HepG2 (cell line): ENCODE measurements at regions of chr20 and their contacts with region 1.

Region 1: DNA sequence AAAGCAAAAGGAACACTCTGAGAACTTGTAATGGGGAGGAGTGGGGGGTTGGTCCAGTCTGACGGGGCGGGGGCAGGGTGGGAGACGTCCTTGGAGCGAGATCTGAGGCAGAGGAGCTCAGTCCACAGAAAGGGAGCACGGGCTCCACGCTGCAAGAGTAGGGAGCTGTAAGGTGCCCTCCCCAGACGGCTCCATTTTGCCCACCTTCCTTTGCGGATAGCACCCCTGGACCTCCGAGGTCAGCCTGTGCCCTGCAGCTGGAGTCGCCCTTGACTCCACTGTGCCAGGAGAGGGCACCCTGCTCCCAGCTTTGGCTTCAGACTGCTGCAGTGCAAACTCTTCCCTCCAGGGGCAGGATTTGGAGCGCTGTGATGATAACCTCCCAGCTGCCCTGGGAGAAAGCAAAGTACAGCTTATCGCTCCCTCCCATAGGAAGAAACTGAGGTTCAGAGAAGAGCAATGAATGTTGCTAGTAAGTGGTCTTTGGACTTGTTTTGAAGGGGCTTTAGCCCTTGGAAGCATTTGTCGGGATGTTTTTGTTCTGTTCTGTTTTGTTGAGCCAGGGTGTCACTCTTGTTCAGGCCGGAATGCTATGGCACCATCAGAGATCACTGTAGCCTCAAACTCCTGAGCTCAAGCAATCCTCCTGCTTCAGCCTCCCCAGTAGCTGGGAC is 9.5 kb upstream of the AHCY start:
- DNase-seq: peak; percentile 96
- ATAC-seq: peak; percentile 73
- H3K4me3 ChIP-seq: peak overlapping the region; percentile 53 to 77 (median 54)
- H3K27ac ChIP-seq: no peak overlapping the region
- H3K4me1 ChIP-seq: peaks cover 73% of the 10 kb centered on the region
- H3K27me3 ChIP-seq: no peaks in the 10 kb centered on the region
- CTCF ChIP-seq: peak; percentile 100
- EP300 ChIP-seq: peak in 1 of 2 experiments; percentile 33; a peak in 2 of 4 replicates
- POLR2A ChIP-seq: no peak
- RAD21 ChIP-seq: peak; percentile 100

Region 2: DNA sequence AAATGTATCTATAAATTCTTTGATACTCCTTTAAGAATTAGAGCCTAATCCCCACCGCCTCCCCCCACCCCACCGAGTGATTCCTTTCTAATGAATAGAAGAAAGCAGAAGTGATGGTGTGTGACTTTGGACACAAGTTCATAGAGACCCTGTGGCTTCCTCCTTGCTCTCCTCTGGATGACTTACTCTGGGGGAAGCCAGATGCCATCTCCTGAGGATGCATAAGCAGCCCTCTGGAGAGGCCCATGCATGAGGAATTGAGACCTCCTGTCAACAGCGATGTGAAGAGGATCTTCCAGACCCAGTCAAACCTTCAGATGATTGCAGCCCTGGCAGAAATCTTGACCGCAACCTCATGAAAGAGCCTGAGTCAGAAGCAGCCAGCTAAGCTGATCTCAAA is 30.6 kb before region 1 on chr20:
- CTCF ChIA-PET with region 1: no interaction called
- POLR2A ChIA-PET with region 1: no interaction called
- in situ Hi-C with region 1: no loop called
- intact Hi-C with region 1: no loop called
- DNase-seq: no peak
- ATAC-seq: no peak
- H3K4me3 ChIP-seq: no peak overlapping the region
- H3K27ac ChIP-seq: no peak overlapping the region
- H3K4me1 ChIP-seq: peaks cover 12% of the 10 kb centered on the region
- H3K27me3 ChIP-seq: no peaks in the 10 kb centered on the region
- CTCF ChIP-seq: no peak
- EP300 ChIP-seq: no peak
- POLR2A ChIP-seq: no peak
- RAD21 ChIP-seq: no peak

Region 3: DNA sequence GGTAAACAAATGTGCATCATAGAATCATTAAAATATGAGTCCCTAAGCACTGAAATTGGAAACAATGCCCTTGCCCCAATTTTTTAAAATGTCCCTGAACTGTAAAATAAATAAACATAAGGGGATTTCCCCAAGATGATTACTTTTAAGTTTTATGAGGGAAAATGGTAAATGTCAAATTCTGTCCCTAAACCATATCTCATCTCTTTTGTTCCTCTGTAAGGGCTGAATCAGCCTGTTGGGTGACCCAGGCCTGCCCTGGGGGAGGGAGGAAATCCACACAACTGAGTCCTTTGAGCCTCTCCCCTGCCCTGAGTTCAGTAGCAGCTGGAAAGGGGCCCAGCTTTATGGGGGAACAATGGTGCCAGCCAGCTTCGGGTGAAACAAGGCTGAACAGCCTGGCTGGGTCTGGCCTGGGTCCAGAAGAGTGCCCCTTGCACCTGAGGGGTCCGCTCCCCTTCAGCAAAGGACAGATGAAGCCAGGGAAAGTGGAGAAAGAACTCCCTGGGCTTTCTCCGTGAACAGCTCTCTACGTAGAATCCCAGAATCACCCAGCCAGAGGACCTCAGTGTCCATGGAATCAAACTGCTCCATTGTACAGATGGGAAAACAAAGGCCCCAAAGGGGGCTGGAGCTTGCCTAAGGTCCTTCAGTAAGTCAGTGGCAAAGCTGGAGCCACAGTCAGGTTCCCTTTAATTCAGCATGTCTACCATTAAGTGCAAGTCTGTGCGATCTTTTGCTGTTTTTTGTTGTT is 22.1 kb after region 1 on chr20:
- CTCF ChIA-PET with region 1: interaction called, 3 read pairs
- POLR2A ChIA-PET with region 1: interaction called, 32 read pairs
- in situ Hi-C with region 1: no loop called
- intact Hi-C with region 1: no loop called
- DNase-seq: peak; percentile 83
- ATAC-seq: peak; percentile 50
- H3K4me3 ChIP-seq: peak overlapping the region in 2 of 3 experiments; percentile 3 to 53; a peak in 2 of 6 replicates
- H3K27ac ChIP-seq: peak overlapping the region; percentile 59
- H3K4me1 ChIP-seq: peaks cover 70% of the 10 kb centered on the region
- H3K27me3 ChIP-seq: no peaks in the 10 kb centered on the region
- CTCF ChIP-seq: no peak; the same call in 1 of the 2 replicates
- EP300 ChIP-seq: peak in 1 of 2 experiments; percentile 54; a peak in 2 of 4 replicates
- POLR2A ChIP-seq: no peak
- RAD21 ChIP-seq: no peak

Region 4: DNA sequence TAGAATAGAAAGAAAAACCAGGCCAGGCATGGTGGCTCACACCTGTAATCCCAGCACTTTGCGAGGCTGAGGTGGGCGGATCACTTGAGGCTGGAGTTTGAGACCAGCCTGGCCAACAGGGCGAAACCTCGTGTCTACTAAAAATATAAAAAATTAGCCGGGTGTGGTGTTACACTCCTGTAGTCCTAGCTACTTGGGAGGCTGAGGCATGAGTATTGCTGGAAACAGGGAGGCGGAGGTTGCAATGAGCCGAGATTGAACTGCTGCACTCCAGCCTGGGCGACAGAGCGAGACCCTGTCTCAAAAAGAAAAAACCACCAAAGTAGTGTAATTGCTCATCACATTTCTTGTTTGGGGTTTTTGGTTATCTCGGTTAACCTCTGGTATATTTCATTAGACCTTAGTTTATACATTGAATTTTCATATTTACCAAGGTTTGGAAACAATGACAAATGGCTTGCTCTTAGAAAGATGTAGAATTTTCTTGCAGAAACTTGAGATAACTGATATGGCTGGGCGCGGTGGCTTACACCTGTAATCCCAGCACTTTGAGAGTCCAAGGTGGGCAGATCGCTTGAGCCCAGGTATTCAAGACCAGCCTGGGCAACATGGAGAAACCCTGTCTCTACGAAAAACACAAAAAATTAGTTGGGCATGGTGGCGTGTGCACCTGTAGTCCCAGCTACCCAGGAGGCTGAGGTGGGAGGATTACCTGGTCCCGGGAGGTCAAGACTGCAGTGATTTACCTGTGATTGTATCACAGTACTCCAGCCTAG is 64.6 kb after region 1 on chr20:
- CTCF ChIA-PET with region 1: interaction called, 3 read pairs
- POLR2A ChIA-PET with region 1: interaction called, 3 read pairs
- in situ Hi-C with region 1: no loop called
- intact Hi-C with region 1: loop called (anchors 1 kb)
- DNase-seq: no peak
- ATAC-seq: no peak
- H3K4me3 ChIP-seq: no peak overlapping the region
- H3K27ac ChIP-seq: no peak overlapping the region
- H3K4me1 ChIP-seq: peaks cover 44% of the 10 kb centered on the region
- H3K27me3 ChIP-seq: no peaks in the 10 kb centered on the region
- CTCF ChIP-seq: no peak
- EP300 ChIP-seq: no peak
- POLR2A ChIP-seq: no peak
- RAD21 ChIP-seq: no peak

Region 5: DNA sequence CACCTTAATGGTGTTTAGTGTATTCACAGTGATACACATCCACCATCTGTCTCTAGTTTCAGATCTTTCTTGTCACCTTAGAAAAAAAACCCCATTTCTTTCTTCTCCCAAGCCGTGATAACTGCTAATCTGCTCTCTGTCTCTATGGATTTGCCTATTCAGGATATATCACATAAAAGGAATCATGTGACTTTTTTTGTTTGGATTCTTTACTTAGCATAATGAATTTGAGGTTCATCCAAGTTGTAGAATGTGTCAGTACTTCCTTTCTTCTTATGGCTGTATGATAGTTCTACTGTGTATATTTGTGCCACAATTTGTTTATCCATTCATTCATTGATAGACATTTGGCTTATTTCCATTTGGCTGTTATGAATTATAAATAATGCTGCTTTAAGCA is 107.5 kb after region 1 on chr20:
- CTCF ChIA-PET with region 1: interaction called, 3 read pairs
- POLR2A ChIA-PET with region 1: no interaction called
- in situ Hi-C with region 1: no loop called
- intact Hi-C with region 1: loop called (anchors 5 kb)
- DNase-seq: no peak
- ATAC-seq: no peak
- H3K4me3 ChIP-seq: no peak overlapping the region
- H3K27ac ChIP-seq: no peak overlapping the region
- H3K4me1 ChIP-seq: peaks cover 34% of the 10 kb centered on the region
- H3K27me3 ChIP-seq: no peaks in the 10 kb centered on the region
- CTCF ChIP-seq: no peak
- EP300 ChIP-seq: no peak
- POLR2A ChIP-seq: no peak
- RAD21 ChIP-seq: no peak

Region 6: DNA sequence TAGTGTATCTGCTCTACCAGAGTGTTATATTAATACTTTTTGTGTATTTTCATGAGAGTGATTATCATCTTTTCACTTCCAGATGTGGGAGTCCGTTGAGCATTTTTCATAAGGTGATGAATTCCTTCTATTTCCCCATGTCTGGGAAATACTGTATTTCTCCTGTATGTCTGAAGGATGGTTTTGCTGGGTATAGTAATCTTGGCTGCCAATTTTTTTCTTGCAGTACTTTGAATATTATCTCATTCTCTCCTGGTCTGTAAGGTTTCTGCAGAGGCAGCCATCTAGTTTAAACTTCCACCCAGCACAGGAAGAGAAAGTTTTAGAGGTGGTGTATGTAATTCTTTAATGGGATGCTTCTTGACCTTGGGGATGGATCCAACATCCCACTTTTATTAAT is 188.1 kb after region 1 on chr20:
- CTCF ChIA-PET with region 1: no interaction called
- POLR2A ChIA-PET with region 1: no interaction called
- in situ Hi-C with region 1: no loop called
- intact Hi-C with region 1: no loop called
- DNase-seq: no peak
- ATAC-seq: no peak
- H3K4me3 ChIP-seq: no peak overlapping the region
- H3K27ac ChIP-seq: no peak overlapping the region
- H3K4me1 ChIP-seq: no peaks in the 10 kb centered on the region
- H3K27me3 ChIP-seq: no peaks in the 10 kb centered on the region
- CTCF ChIP-seq: no peak
- EP300 ChIP-seq: no peak
- POLR2A ChIP-seq: no peak
- RAD21 ChIP-seq: no peak

Region 7: GRCh38 chr20:34516247-34517113 is 203.8 kb after region 1 on chr20 and contains the start of gene DYNLRB1:
- CTCF ChIA-PET with region 1: no interaction called
- POLR2A ChIA-PET with region 1: interaction called, 57 read pairs
- in situ Hi-C with region 1: loop called (anchors 5 kb)
- intact Hi-C with region 1: no loop called
- DNase-seq: peak; percentile 98
- ATAC-seq: peak; percentile 91
- H3K4me3 ChIP-seq: peak within 1 kb of the TSS; percentile 85 to 89 (median 87)
- H3K27ac ChIP-seq: peak within 1 kb of the TSS; percentile 80
- H3K4me1 ChIP-seq: peaks cover 62% of the 10 kb centered on the region
- H3K27me3 ChIP-seq: no peaks in the 10 kb centered on the region; a peak in 1 of 5 replicates
- CTCF ChIP-seq: 0 out of 2 replicates have a peak, but pooled peaks have one; percentile 15
- EP300 ChIP-seq: no peak; a peak in 2 of 4 replicates
- POLR2A ChIP-seq: peak; percentile 90 to 99
- RAD21 ChIP-seq: peak; percentile 55
- total RNA-seq, gene DYNLRB1: 140 and 151 TPM in 2 replicates

Region 8: GRCh38 chr20:34676642-34677373 is 364.1 kb after region 1 on chr20 and contains the start of gene PIGU:
- CTCF ChIA-PET with region 1: no interaction called
- POLR2A ChIA-PET with region 1: no interaction called
- in situ Hi-C with region 1: no loop called
- intact Hi-C with region 1: loop called (anchors 1 kb)
- DNase-seq: peak; percentile 95
- ATAC-seq: peak; percentile 97
- H3K4me3 ChIP-seq: peak within 1 kb of the TSS; percentile 87 to 96 (median 89)
- H3K27ac ChIP-seq: peak within 1 kb of the TSS; percentile 86
- H3K4me1 ChIP-seq: peaks cover 29% of the 10 kb centered on the region
- H3K27me3 ChIP-seq: peaks cover 0 to 4% of the 10 kb centered on the region in 2 experiments; a peak in 1 of 5 replicates
- CTCF ChIP-seq: peak; percentile 59; the same call in 1 of the 2 replicates
- EP300 ChIP-seq: peak in 1 of 2 experiments; percentile 61; a peak in 1 of 4 replicates
- POLR2A ChIP-seq: peak; percentile 88 to 91
- RAD21 ChIP-seq: peak; percentile 61
- total RNA-seq, gene PIGU: 27.1 and 45.5 TPM in 2 replicates